ENCODE measurements at regions of chr7 and their contacts with region 1.

Region 1: DNA sequence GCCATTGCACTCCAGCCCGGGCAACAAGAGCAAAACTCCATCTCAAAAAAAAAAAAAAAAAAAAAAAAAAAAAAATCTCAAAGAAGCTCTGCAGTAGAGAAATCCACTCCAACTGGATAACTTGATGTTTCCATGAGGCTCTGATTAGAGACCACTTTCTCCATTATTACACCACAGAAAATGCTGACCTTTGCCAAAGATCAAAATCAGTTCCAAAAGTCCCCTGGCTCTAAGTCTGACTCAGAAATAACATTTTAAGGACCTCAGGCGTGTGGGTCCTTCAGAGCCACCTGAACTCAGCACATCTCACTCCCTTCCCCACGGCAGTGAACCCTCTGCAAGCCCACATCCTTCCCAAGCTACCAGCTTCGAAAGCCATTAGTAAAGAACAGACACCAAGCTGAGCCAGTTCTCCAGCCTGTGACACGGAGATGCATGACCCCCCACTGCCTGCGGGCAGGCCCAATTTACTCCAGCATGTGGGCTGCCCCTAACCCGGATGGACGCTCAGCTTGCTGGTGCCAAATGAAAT is 13.8 kb upstream of the TMEM120A start:
- DNase-seq: peak; percentile 76
- H3K4me3 Mint-ChIP-seq: peak overlapping the region; percentile 62
- H3K27ac Mint-ChIP-seq: peak overlapping the region; percentile 87
- H3K4me1 Mint-ChIP-seq: peaks cover 40% of the 10 kb centered on the region
- H3K27me3 Mint-ChIP-seq: no peaks in the 10 kb centered on the region

Region 2: GRCh38 chr7:75776295-75776971 is 231.8 kb before region 1 on chr7:
- intact Hi-C with region 1: loop called (anchors 1 kb)
- DNase-seq: peak; percentile 77
- H3K4me3 Mint-ChIP-seq: peak overlapping the region; percentile 9
- H3K27ac Mint-ChIP-seq: peak overlapping the region; percentile 83
- H3K4me1 Mint-ChIP-seq: peaks cover 31% of the 10 kb centered on the region
- H3K27me3 Mint-ChIP-seq: peaks cover 15% of the 10 kb centered on the region

Region 3: GRCh38 chr7:75842836-75843446 is 165.3 kb before region 1 on chr7:
- intact Hi-C with region 1: loop called (anchors 1 kb)
- DNase-seq: peak; percentile 70
- H3K4me3 Mint-ChIP-seq: peak overlapping the region; percentile 66
- H3K27ac Mint-ChIP-seq: peak overlapping the region; percentile 95
- H3K4me1 Mint-ChIP-seq: peaks cover 18% of the 10 kb centered on the region
- H3K27me3 Mint-ChIP-seq: no peaks in the 10 kb centered on the region

Region 4: DNA sequence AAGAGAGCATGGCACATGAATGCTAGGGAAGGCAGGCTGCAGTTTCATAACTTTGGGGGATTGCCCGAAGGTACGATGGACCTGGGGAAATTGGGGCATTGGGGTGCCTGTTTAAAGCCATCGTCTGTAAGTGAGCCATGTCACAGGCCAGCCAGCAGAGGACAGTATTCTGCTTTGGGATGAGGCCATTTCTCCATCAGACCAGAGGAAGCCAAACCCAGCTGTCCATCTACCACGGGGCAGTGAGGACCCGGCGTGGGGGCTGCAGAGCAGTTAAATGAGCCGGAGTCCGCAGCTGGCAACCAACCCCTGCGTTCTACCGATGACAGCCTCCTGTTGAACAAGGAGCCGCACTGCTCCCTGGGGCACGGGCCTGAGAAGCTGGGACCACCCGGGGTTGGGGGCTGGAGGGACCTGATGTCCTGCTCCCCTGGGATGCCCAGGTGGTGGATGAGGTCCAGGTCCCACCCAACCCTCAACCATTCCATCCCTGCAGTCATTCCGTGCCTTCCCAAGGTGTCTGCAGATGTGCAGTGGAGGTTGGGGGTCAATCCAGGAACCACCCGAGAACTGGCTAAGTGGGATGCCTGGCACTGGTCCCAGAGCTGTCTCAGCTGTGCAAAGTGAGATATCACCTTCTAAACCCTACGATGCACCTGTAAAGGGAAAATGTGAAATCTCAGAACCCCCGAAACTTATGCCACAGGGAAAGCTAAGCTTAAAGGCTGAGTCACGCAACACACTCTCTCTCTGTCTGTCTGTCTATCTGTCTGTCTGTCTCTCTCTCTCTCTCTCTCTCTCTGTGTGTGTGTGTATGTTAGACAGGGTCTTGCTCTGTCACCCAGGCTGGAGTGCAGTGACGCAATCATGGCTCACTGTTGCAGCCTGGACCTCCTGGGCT is 141.5 kb before region 1 on chr7:
- intact Hi-C with region 1: loop called (anchors 2 kb)
- DNase-seq: peak; percentile 83
- H3K4me3 Mint-ChIP-seq: no peak overlapping the region
- H3K27ac Mint-ChIP-seq: no peak overlapping the region
- H3K4me1 Mint-ChIP-seq: peaks cover 23% of the 10 kb centered on the region
- H3K27me3 Mint-ChIP-seq: peaks cover 13% of the 10 kb centered on the region

Region 5: GRCh38 chr7:75914730-75915585 is 93.3 kb before region 1 on chr7 and contains the start of gene POR:
- intact Hi-C with region 1: loop called (anchors 2 kb)
- DNase-seq: peak; percentile 100
- H3K4me3 Mint-ChIP-seq: peak within 1 kb of the TSS; percentile 91
- H3K27ac Mint-ChIP-seq: peak within 1 kb of the TSS; percentile 90
- H3K4me1 Mint-ChIP-seq: peaks cover 22% of the 10 kb centered on the region
- H3K27me3 Mint-ChIP-seq: no peaks in the 10 kb centered on the region
- total RNA-seq, gene POR: 69.4 and 75.0 TPM in 2 replicates

Region 6: DNA sequence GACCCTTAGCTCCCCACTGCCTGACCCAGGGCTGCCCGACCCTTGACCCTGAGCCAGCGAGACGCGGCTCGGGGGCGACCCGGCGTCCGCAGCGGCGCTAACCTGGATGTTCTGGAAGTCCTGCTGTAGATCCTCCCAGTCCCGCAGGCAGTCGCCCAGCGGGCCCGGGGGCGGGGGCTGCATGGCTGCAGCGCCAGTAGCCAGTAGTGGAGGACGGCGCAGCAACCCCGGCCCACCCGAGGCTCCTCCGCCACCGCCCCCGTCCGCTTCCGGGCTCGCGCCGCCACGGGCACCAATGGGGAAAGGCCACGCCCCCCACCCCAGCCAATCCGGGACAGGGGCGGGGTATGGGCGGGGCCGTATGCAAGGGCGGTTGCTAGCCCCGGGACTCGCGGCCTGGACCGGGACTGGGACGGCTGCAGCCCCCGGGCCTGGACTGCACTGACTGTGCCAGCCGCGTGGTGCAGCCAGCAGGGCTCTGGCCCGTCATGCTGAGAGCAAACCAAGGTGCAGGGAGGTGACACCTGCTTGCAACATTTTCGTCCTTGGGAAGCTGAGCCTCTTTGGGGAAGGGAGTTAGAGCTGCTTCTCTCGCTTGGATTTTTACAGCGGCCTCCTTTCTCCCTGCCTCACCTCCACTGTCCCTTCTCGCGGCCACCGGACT is 13.7 kb before region 1 on chr7 and contains the start of gene TMEM120A:
- intact Hi-C with region 1: loop called (anchors 1 kb)
- DNase-seq: peak; percentile 99
- H3K4me3 Mint-ChIP-seq: peak within 1 kb of the TSS; percentile 81
- H3K27ac Mint-ChIP-seq: peak within 1 kb of the TSS; percentile 41
- H3K4me1 Mint-ChIP-seq: peaks cover 36% of the 10 kb centered on the region
- H3K27me3 Mint-ChIP-seq: no peaks in the 10 kb centered on the region
- total RNA-seq, gene TMEM120A: 36.1 and 38.2 TPM in 2 replicates

Region 7: GRCh38 chr7:76047811-76048667 is 39.8 kb after region 1 on chr7 and contains the starts of genes MDH2 and STYXL1:
- intact Hi-C with region 1: loop called (anchors 2 kb)
- DNase-seq: peak; percentile 98
- H3K4me3 Mint-ChIP-seq: peak within 1 kb of the TSS; percentile 97
- H3K27ac Mint-ChIP-seq: peak within 1 kb of the TSS; percentile 96
- H3K4me1 Mint-ChIP-seq: peaks cover 39% of the 10 kb centered on the region
- H3K27me3 Mint-ChIP-seq: no peaks in the 10 kb centered on the region
- total RNA-seq, gene MDH2: 291 and 293 TPM in 2 replicates
- total RNA-seq, gene STYXL1: 30.9 and 33.6 TPM in 2 replicates